CD4-positive, alpha-beta memory T cell (primary cell): ENCODE measurements at regions of chr20 and their contacts with region 1.

Region 1: GRCh38 chr20:32207626-32208498 is at the starts of genes PLAGL2 and POFUT1:
- DNase-seq: peak; percentile 84 to 91 (median 89)
- H3K4me3 ChIP-seq: peak within 1 kb of the TSS; percentile 62 to 94
- H3K4me3 Mint-ChIP-seq: peak within 1 kb of the TSS; percentile 90 to 97 (median 95)
- H3K27ac ChIP-seq: peak within 1 kb of the TSS; percentile 87
- H3K27ac Mint-ChIP-seq: peak within 1 kb of the TSS; percentile 90 to 99 (median 97)
- H3K4me1 ChIP-seq: peaks cover 70% of the 10 kb centered on the region
- H3K4me1 Mint-ChIP-seq: peaks cover 62 to 76% (median 72%) of the 10 kb centered on the region in 4 donors
- H3K27me3 ChIP-seq: no peaks in the 10 kb centered on the region
- H3K27me3 Mint-ChIP-seq: no peaks in the 10 kb centered on the region
- total RNA-seq, gene PLAGL2: 18.7 to 20.7 TPM
- total RNA-seq, gene POFUT1: 19.7 to 20.8 TPM

Region 2: DNA sequence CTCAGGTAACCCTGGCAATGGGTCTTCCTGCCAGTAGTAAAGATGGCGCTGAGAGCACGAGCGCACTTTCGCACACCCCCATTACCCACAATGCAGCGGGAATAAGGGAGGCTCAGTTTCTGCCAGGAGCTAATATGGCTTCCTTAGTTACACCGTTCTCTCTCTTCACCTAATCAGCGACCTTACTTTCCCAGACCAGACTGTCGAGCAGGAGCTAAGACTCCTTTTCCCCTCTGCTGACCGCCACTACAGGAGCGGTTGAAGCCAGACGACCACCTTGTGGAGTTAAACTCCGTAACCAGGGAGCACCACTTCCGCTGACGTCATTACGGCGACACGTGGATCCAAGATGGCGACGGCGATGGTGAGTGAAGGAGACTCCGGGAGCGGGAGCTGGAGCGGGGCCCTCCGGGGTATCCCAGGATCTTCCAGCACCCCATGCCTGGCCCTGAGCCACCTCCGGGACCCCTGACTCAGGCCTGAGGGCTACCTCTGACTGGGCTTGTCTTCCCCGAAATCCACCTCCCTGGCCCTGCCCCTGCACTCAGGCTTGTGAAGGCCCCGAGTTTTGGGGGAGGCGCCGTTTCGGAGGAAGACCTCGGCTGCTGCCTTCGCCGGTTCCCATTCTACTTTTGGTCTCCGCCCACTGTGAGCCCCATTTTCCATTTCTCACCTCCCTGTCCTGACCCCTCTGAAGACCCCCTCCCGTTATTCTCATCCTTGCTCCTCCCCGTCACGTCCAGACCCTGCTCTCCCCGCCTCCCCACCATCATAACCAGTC is 98.3 kb before region 1 on chr20 and contains the start of gene TM9SF4:
- CTCF ChIA-PET with region 1: interaction called, 4 read pairs
- POLR2A ChIA-PET with region 1: interaction called, 3 read pairs
- intact Hi-C with region 1: loop called (anchors 2 kb)
- DNase-seq: peak; percentile 93 to 94 (median 94)
- H3K4me3 ChIP-seq: peak within 1 kb of the TSS; percentile 90 to 92
- H3K4me3 Mint-ChIP-seq: peak within 1 kb of the TSS; percentile 95 to 100 (median 98)
- H3K27ac ChIP-seq: peak within 1 kb of the TSS; percentile 100
- H3K27ac Mint-ChIP-seq: peak within 1 kb of the TSS; percentile 96 to 100 (median 100)
- H3K4me1 ChIP-seq: peaks cover 36% of the 10 kb centered on the region
- H3K4me1 Mint-ChIP-seq: peaks cover 26 to 44% (median 36%) of the 10 kb centered on the region in 4 donors
- H3K27me3 ChIP-seq: no peaks in the 10 kb centered on the region
- H3K27me3 Mint-ChIP-seq: no peaks in the 10 kb centered on the region
- total RNA-seq, gene TM9SF4: 36.4 to 40.7 TPM

Region 3: GRCh38 chr20:32189691-32190615 is 17.9 kb before region 1 on chr20:
- CTCF ChIA-PET with region 1: no interaction called
- POLR2A ChIA-PET with region 1: interaction called, 8 read pairs
- intact Hi-C with region 1: loop called (anchors 2 kb)
- DNase-seq: peak; percentile 42 to 52 (median 47)
- H3K4me3 ChIP-seq: peak overlapping the region; percentile 57 to 60
- H3K4me3 Mint-ChIP-seq: peak overlapping the region; percentile 83 to 92 (median 86)
- H3K27ac ChIP-seq: peak overlapping the region; percentile 59
- H3K27ac Mint-ChIP-seq: peak overlapping the region; percentile 85 to 96 (median 93)
- H3K4me1 ChIP-seq: peaks cover 16% of the 10 kb centered on the region
- H3K4me1 Mint-ChIP-seq: peaks cover 6 to 34% (median 22%) of the 10 kb centered on the region in 4 donors
- H3K27me3 ChIP-seq: no peaks in the 10 kb centered on the region
- H3K27me3 Mint-ChIP-seq: no peaks in the 10 kb centered on the region

Region 4: DNA sequence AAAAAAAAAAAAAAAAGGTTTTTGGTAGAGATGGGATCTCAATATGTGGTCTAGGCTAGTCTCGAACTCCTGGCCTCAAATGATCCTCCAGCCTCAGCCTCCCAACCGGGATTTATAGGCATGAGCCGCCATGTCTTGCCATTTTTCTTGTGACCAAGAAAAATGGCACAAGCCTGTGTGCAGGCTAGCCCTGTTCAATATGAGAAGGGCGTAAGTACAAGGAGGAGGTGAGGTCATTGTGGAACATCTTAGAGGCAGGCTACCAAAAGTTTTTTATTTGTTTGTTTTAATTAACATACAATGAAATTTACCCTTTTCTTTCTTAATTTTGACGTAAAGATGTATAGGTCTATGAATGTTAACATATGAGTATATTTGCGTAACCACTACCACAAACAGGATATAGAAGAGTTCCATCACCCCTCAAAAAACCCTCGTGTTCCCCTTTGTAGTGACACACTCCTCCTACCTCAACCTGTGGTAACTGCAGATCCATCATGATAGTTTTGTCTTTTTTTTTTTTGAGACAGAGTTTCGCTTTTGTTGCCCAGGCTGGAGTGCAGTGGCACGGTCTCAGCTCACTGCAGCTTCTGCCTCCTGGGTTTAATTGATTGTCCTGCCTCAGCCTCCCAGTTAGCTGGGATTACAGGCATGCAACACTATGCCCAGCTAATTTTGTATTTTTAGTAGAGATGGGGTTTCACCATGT is 41.3 kb after region 1 on chr20:
- CTCF ChIA-PET with region 1: no interaction called
- POLR2A ChIA-PET with region 1: no interaction called
- intact Hi-C with region 1: loop called (anchors 5 kb)
- DNase-seq: peak; percentile 73 to 87 (median 80)
- H3K4me3 ChIP-seq: no peak overlapping the region
- H3K4me3 Mint-ChIP-seq: peak overlapping the region; percentile 4 to 75 (median 48)
- H3K27ac ChIP-seq: peak overlapping the region; percentile 21
- H3K27ac Mint-ChIP-seq: peak overlapping the region; percentile 65 to 92 (median 91)
- H3K4me1 ChIP-seq: peaks cover 17% of the 10 kb centered on the region
- H3K4me1 Mint-ChIP-seq: peaks cover 14 to 32% (median 23%) of the 10 kb centered on the region in 4 donors
- H3K27me3 ChIP-seq: no peaks in the 10 kb centered on the region
- H3K27me3 Mint-ChIP-seq: no peaks in the 10 kb centered on the region

Region 5: DNA sequence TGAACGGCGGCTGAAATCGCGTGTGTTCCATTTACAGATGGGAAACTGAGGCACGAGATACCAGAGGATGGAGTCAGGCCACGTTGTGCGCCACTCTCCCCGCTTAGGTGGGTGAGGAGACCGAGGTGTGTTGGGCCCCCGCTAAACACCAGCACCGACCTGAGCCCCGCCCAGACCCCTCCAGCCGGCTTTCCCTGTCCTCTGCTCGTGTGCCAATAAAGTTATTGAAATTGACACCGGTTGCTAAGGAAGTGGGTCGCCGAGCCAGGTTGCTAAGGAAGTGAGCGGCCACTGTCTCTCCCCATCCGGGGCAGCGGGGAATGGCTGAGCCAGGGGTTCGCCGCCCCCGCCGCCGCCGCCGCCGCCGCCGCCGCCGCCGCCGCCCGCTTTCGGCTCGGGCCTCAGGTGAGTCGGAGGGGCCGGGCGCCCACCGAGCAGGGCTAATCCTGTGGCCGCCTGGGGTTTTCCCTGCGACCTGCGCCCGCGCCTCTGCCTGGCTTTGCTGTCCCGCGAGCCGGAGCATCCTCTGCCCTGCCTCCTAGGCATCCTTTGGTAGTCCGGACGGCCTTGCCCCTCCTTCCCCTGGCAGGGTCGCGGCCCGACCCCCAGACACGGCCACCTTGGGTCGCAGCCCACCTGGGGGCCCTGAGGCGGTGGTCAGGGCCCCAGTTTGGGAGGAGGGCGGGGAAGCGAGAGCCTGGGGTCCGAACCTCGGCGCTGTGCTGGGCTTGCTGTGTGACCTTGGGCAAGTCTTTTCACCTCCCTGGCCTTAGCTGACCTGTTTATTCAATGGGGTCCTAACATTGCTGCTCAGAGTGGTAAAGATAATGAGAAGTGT is 69.7 kb after region 1 on chr20 and contains the start of gene KIF3B:
- CTCF ChIA-PET with region 1: no interaction called
- POLR2A ChIA-PET with region 1: no interaction called
- intact Hi-C with region 1: loop called (anchors 2 kb)
- DNase-seq: peak; percentile 87 to 90 (median 88)
- H3K4me3 ChIP-seq: peak within 1 kb of the TSS; percentile 68 to 96
- H3K4me3 Mint-ChIP-seq: peak within 1 kb of the TSS; percentile 91 to 94 (median 92)
- H3K27ac ChIP-seq: peak within 1 kb of the TSS; percentile 85
- H3K27ac Mint-ChIP-seq: peak within 1 kb of the TSS; percentile 88 to 98 (median 96)
- H3K4me1 ChIP-seq: peaks cover 27% of the 10 kb centered on the region
- H3K4me1 Mint-ChIP-seq: peaks cover 27 to 52% (median 42%) of the 10 kb centered on the region in 4 donors
- H3K27me3 ChIP-seq: no peaks in the 10 kb centered on the region
- H3K27me3 Mint-ChIP-seq: no peaks in the 10 kb centered on the region
- total RNA-seq, gene KIF3B: 14.2 to 14.5 TPM